ENCODE measurements at regions of chr15 and their contacts with region 1.

Region 1: DNA sequence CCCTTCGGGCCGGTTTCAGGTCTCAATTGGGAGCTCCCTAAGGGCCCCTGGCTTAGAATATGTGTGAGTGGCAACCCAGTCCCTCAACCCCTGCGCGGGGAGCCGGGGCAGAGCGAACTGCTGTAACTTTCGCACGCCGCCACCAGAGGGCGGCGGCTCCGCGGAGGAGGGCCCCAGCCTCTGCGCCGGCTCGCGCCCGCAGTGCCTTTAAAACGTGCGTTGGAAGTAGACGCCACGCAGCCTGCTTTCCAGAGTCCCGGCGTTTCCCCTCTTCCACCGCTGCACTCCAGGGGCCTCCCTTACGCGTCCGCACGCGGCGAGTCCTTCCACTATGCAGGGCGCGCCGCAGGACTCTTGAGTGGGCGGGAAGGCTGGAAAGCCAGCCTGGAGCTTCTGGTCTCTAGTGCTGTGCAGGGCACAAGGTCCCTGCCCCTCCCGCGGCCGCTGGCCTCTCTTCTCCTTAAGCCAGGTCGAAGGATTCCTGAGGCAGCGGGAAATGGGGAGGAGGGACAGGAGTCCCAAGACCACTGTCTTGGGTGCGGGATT is 23.7 kb upstream of the RNU6-1 start:
- DNase-seq: peak; percentile 96
- H3K4me3 ChIP-seq: peak overlapping the region in 6 of 8 donors; percentile 11 to 61 (median 38)
- H3K27ac ChIP-seq: peak overlapping the region in 4 of 8 donors; percentile 5 to 42 (median 15)
- H3K4me1 ChIP-seq: peaks cover 9 to 17% (median 15%) of the 10 kb centered on the region in 6 donors
- H3K27me3 ChIP-seq: peaks cover 0 to 5% (median 0%) of the 10 kb centered on the region in 7 donors
- CTCF ChIP-seq: peak; percentile 70 to 96 (median 91)
- POLR2A ChIP-seq: no peak

Region 2: DNA sequence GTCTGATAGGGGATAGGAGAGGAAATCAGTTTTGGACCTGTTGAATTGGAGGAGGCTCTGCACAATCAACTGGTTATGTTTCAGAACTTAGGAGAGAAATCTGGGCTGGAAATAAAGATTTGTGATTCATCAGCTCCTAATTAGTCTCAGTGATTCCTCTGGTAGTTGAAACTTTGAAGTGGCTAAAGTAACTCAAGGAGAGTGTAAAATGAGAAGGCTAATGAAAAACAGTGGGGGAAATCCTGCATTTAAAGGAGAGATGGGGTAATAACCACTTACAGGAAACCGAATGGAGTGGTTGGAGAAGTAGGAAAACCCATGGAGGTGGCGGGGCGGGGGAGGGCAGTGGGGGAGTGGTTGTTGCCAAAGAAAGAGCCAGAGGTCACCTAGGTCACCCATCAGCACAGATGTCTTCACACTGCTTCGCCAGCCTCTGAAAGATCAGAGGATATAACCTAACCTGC is 288.4 kb before region 1 on chr15:
- intact Hi-C with region 1: no loop called
- DNase-seq: no peak
- H3K4me3 ChIP-seq: no peak overlapping the region
- H3K27ac ChIP-seq: no peak overlapping the region
- H3K4me1 ChIP-seq: no peaks in the 10 kb centered on the region
- H3K27me3 ChIP-seq: no peaks in the 10 kb centered on the region
- CTCF ChIP-seq: no peak
- POLR2A ChIP-seq: no peak

Region 3: GRCh38 chr15:68154923-68155559 is 291.5 kb after region 1 on chr15:
- intact Hi-C with region 1: loop called (anchors 5 kb)
- DNase-seq: no peak
- H3K4me3 ChIP-seq: no peak overlapping the region
- H3K27ac ChIP-seq: no peak overlapping the region
- H3K4me1 ChIP-seq: peaks cover 0 to 10% (median 0%) of the 10 kb centered on the region in 6 donors
- H3K27me3 ChIP-seq: no peaks in the 10 kb centered on the region
- CTCF ChIP-seq: peak in 9 of 11 experiments; percentile 36 to 66 (median 49)
- POLR2A ChIP-seq: no peak

Region 4: DNA sequence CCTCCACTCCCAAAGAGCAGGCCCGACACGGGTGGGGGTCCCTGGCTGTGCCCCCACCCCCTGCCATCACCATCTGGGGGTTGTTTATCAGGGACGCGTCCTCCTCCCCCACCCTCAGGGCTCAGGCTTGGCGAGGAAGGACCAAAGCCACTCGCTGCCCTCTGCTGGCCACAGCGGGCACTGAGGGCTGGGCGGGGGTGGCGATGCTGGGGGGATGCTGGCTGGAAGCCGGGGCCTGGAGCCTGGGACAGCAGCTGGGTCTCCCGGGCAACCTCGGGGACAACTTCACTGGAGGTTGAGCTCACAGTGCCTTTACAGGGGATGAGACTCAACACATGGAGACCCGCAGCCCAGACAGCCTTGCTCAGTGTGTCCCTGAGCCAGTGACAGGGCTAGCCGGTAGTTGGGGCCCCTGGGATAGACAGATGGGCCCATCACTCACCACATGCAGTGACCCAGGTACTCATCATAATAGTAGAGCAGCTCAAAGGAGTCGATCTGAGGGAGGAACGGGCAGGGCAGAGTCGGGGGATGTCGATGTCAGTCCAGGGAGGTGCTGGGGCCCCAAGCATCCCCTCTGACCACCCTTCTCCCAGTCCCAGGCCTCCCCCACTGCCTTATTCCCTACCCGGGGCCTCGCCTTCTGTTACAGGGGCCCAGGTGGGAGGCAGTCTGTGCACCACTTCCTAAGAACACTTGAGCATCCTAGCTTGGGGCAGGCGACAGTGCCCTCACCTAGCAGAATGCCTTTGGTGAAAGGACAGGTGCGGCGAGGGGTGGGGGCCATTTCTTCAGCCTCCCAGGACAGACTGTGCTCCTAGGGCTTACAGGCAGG is 347.5 kb after region 1 on chr15:
- intact Hi-C with region 1: loop called (anchors 5 kb)
- DNase-seq: peak; percentile 90
- H3K4me3 ChIP-seq: no peak overlapping the region
- H3K27ac ChIP-seq: peak overlapping the region in 1 of 8 donors; percentile 10
- H3K4me1 ChIP-seq: peaks cover 0 to 64% (median 41%) of the 10 kb centered on the region in 6 donors
- H3K27me3 ChIP-seq: no peaks in the 10 kb centered on the region
- CTCF ChIP-seq: peak; percentile 42 to 90 (median 79)
- POLR2A ChIP-seq: no peak